ENCODE measurements at regions of chr6 and their contacts with region 1.

Region 1: DNA sequence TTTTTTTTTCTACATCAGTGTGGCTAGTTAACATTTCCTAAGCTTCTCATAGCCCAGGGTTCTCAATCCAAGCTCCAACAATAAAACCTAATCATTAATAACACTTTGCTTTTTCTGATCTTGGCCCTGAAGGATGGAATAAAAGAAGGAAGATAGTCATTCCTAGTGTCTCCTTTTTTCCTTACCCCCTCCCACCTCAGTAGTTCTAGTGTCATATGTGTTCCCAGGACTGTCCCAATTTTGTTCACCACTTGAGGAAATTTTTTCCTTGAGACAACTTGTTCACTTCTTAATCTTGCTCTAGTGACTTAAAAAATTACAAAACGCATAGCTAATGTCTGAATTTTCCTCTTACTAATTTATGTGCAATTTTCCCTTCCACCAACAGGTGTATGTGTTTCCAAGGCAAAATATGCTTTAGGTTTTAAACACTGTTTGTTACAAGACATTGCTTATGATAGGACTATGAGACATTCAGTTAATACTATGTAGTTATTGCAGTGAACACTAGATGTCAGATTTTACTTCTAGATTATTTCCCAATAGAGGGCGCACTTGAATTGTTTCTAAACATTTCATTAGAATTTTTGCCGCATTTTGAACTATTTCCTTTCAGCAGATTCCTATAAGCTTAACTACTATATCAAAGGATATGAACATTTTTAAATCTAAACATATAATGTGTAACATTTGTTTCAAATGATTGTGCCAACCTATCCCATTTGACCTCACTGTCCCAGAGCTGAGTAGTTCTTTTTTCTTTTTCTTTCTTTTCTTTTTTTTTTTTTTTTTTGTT is 18.5 kb upstream of the C6orf141 start:
- DNase-seq: no peak
- H3K4me3 ChIP-seq: peak overlapping the region in 30 of 59 donors; percentile 4 to 50 (median 23)
- H3K27ac ChIP-seq: no peak overlapping the region
- H3K27me3 ChIP-seq: no peaks in the 10 kb centered on the region
- CTCF ChIP-seq: peak; percentile 74 to 99 (median 90)

Region 2: GRCh38 chr6:49606696-49607390 is 74.9 kb after region 1 on chr6:
- intact Hi-C with region 1: loop called in 1 of 2 experiments (anchors 5 kb)
- DNase-seq: peak in 2 of 10 donors; percentile 3 to 15
- H3K4me3 ChIP-seq: no peak overlapping the region
- H3K27ac ChIP-seq: no peak overlapping the region
- H3K27me3 ChIP-seq: peaks cover 0 to 11% (median 0%) of the 10 kb centered on the region in 45 donors
- CTCF ChIP-seq: peak; percentile 71 to 95 (median 85)

Region 3: DNA sequence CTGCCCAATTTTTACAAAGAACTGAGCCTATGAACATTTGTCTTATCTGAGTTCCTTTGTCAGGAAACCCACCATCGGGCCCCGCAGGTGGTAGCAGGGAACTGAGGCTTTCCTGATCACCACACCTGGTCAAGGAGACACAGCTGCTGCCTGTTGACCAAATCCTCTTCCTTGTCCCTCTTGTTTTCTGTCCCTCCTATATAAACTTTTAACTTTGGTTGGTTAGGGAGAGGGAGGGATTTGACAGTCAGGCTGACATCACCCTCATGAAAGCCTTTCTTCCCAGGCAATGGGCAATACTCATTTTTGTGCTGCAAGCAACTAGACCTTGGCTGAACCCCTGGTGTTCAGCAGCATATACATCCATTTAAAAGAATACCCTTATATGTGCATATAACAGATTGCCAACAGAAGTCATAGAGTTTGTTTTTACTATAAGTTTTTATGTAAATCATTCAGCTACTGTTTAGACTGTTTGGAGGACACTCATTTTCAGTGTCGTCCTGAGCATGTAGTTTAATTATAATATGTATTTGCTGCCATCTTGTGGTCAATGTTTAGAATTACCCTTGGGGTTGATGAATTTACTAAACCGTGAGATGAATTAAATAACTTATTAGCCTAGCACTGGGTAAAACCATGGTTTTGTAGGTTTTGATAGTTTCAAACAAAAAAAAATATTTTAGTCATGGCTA is 317.4 kb after region 1 on chr6:
- intact Hi-C with region 1: loop called (anchors 1 to 5 kb)
- DNase-seq: no peak
- H3K4me3 ChIP-seq: no peak overlapping the region
- H3K27ac ChIP-seq: no peak overlapping the region
- H3K27me3 ChIP-seq: peaks cover 0 to 19% (median 0%) of the 10 kb centered on the region in 45 donors
- CTCF ChIP-seq: peak; percentile 54 to 91 (median 78)

Measured in dorsolateral prefrontal cortex (tissue), 120 donors.